ENCODE measurements at regions of chr2 and their contacts with region 1.

Region 1: GRCh38 chr2:119678998-119679710 is at the start of gene TMEM177:
- DNase-seq: peak; percentile 72 to 96 (median 87)
- ATAC-seq: peak; percentile 91
- H3K4me3 ChIP-seq: peak within 1 kb of the TSS; percentile 95
- H3K4me3 Mint-ChIP-seq: peak within 1 kb of the TSS; percentile 87 to 96 (median 90)
- H3K27ac ChIP-seq: peak within 1 kb of the TSS; percentile 88
- H3K27ac Mint-ChIP-seq: peak within 1 kb of the TSS; percentile 58 to 99 (median 97)
- H3K4me1 ChIP-seq: peaks cover 0 to 15% of the 10 kb centered on the region in 2 donors
- H3K4me1 Mint-ChIP-seq: peaks cover 25 to 48% (median 38%) of the 10 kb centered on the region in 7 donors
- H3K27me3 ChIP-seq: no peaks in the 10 kb centered on the region
- H3K27me3 Mint-ChIP-seq: peaks cover 0 to 21% (median 0%) of the 10 kb centered on the region in 5 donors
- total RNA-seq, gene TMEM177: 5.5 to 38.1 (median 11.6) TPM

Region 2: GRCh38 chr2:118088051-118089024 is 1590.8 kb before region 1 on chr2 and contains the start of gene INSIG2:
- CTCF ChIA-PET with region 1: no interaction called
- POLR2A ChIA-PET with region 1: no interaction called
- intact Hi-C with region 1: loop called in 1 of 2 experiments (anchors 5 kb)
- DNase-seq: peak; percentile 77 to 92 (median 81)
- ATAC-seq: peak; percentile 93
- H3K4me3 ChIP-seq: peak within 1 kb of the TSS; percentile 92
- H3K4me3 Mint-ChIP-seq: peak within 1 kb of the TSS; percentile 63 to 96 (median 92)
- H3K27ac ChIP-seq: peak within 1 kb of the TSS; percentile 87
- H3K27ac Mint-ChIP-seq: peak within 1 kb of the TSS; percentile 70 to 97 (median 91)
- H3K4me1 ChIP-seq: peaks cover 0 to 7% of the 10 kb centered on the region in 2 donors
- H3K4me1 Mint-ChIP-seq: peaks cover 6 to 37% (median 24%) of the 10 kb centered on the region in 7 donors
- H3K27me3 ChIP-seq: no peaks in the 10 kb centered on the region
- H3K27me3 Mint-ChIP-seq: peaks cover 0 to 12% (median 0%) of the 10 kb centered on the region in 5 donors
- total RNA-seq, gene INSIG2: 8.5 to 31.5 (median 20.3) TPM

Region 3: DNA sequence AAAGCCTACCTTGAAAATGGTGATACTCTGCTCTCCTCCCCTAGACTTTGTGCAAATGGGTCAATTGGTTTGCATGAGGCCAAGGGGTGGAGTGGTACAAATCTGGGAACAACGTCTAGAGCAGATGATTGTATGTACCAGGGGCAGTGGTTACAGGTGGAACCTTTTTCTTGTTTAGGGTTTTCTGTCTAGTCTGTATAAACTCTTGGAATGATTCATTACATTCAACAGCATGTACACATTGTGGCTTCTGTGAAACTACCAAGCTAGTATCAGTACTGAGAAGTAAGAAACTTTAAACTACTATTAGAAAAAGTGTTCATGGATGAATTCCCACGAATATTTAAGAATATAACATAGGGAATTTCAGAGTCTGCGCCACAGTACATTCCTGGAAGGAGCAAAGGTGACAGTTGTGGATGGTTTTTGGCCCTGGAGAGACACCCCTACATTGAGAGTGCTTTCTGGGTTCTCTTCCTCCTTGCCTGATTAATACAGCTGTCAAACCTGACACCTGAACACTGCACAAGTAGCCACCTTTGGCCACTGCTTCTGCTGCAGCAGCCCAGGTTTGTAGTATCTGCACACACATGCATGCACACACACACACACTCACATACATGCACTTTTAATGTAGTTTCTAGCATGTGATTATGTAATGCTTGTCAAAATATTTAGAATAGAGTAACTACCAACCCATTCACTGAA is 104.9 kb before region 1 on chr2:
- CTCF ChIA-PET with region 1: no interaction called
- POLR2A ChIA-PET with region 1: no interaction called
- intact Hi-C with region 1: no loop called
- DNase-seq: no peak
- ATAC-seq: no peak
- H3K4me3 ChIP-seq: no peak overlapping the region
- H3K4me3 Mint-ChIP-seq: no peak overlapping the region
- H3K27ac ChIP-seq: no peak overlapping the region
- H3K27ac Mint-ChIP-seq: no peak overlapping the region
- H3K4me1 ChIP-seq: no peaks in the 10 kb centered on the region
- H3K4me1 Mint-ChIP-seq: no peaks in the 10 kb centered on the region
- H3K27me3 ChIP-seq: no peaks in the 10 kb centered on the region
- H3K27me3 Mint-ChIP-seq: peaks cover 7 to 39% (median 20%) of the 10 kb centered on the region in 5 donors

Region 4: GRCh38 chr2:119641562-119642258 is 37.4 kb before region 1 on chr2:
- CTCF ChIA-PET with region 1: interaction called, 4 read pairs
- POLR2A ChIA-PET with region 1: interaction called, 3 read pairs
- intact Hi-C with region 1: loop called in 1 of 2 experiments (anchors 1 kb)
- DNase-seq: peak; percentile 42 to 77 (median 64)
- ATAC-seq: peak; percentile 95
- H3K4me3 ChIP-seq: no peak overlapping the region
- H3K4me3 Mint-ChIP-seq: no peak overlapping the region
- H3K27ac ChIP-seq: no peak overlapping the region
- H3K27ac Mint-ChIP-seq: no peak overlapping the region
- H3K4me1 ChIP-seq: peaks cover 0 to 4% of the 10 kb centered on the region in 2 donors
- H3K4me1 Mint-ChIP-seq: peaks cover 0 to 13% (median 5%) of the 10 kb centered on the region in 7 donors
- H3K27me3 ChIP-seq: no peaks in the 10 kb centered on the region
- H3K27me3 Mint-ChIP-seq: peaks cover 0 to 14% (median 0%) of the 10 kb centered on the region in 5 donors

Region 5: DNA sequence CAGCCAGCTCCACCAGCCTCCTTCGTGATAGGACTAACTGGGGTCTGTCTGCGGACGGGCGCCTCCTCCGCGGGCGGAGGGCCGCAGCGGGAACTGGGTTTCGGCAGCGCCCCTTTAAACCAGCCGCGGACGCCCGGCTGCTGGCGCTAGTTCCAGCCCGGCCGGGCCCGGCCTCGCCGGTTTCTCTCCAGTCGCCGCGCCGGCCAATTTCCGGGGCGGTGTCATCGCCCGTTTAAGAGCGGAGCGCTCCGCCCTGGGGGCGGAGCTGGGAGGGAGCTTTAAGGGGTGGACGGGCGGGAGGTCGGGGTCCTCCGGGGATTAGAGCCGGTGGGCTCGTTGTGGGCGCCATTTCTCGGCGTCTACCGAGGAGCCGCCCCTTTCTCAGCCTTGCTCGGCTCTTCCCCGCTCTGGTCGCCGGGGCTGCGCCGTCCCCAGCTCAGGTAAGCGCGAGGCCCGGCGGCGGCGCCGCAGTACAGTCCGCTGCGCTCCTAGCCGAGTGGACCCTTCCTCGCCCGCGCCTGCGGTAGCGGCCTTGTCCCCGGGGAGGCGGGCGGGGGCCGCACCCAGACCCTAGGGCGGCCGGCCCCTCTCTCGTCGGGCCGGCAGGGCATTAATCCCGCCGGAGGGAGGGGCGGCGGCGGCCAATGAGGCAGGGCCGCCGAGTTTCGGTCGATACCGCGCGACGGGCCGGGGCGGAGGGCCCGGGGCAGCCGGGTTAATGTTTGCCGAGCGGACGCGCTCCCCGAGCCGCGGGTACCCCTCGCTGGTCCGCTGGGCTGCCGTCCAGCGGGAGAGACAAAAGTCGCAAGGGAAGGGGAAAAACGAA is 333.8 kb after region 1 on chr2 and contains the start of gene EPB41L5:
- CTCF ChIA-PET with region 1: no interaction called
- POLR2A ChIA-PET with region 1: interaction called, 3 read pairs
- intact Hi-C with region 1: loop called (anchors 1 to 2 kb)
- DNase-seq: peak; percentile 56 to 81 (median 67)
- ATAC-seq: peak; percentile 93
- H3K4me3 ChIP-seq: peak within 1 kb of the TSS; percentile 69
- H3K4me3 Mint-ChIP-seq: peak within 1 kb of the TSS; percentile 73 to 89 (median 86)
- H3K27ac ChIP-seq: peak within 1 kb of the TSS; percentile 70
- H3K27ac Mint-ChIP-seq: peak within 1 kb of the TSS in 8 of 9 donors; percentile 36 to 75 (median 70)
- H3K4me1 ChIP-seq: peaks cover 6% of the 10 kb centered on the region in 2 donors
- H3K4me1 Mint-ChIP-seq: peaks cover 8 to 37% (median 24%) of the 10 kb centered on the region in 7 donors
- H3K27me3 ChIP-seq: no peaks in the 10 kb centered on the region
- H3K27me3 Mint-ChIP-seq: peaks cover 0 to 20% (median 0%) of the 10 kb centered on the region in 5 donors
- total RNA-seq, gene EPB41L5: 2.2 to 9.3 (median 6.8) TPM

Region 6: DNA sequence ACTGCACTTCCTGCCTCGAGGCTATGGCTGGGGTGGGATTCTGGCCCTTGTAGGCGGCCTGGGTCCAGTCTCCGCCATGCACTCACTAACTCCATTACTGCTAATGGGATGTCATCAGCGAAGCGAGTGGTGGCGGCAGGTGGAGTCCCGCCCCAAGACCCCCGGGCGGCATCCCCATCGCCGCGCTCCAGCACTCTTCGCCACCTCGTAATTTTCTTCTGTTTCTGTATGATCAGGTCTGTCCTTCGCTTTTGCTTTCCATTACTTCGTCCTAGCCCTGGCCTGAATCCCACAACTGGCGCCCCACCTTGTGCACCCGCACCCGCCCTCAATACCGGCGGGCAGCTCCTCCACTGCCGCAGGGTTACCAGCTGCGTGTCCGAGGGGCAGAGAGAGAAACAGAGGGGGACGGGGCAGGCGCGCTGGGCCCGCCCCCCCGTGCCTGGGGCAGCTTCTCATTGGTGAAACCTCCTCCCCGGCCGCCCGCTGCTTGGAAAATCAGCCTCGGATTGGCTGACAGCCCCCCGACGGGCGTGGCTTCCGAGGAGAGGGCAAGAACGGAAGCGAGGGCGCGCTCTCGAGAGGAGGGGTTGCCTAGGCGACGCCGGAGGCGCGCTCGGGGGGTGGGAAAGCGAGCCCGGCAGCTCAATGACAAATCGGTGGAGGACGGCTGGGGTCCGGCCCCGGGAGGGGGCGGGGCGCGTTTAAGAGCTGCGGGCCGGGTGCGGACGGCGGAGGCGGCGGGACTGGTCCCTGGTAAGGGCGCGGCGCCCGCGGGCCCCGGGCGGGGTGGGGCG is 573.3 kb after region 1 on chr2 and contains the start of gene RALB:
- CTCF ChIA-PET with region 1: no interaction called
- POLR2A ChIA-PET with region 1: interaction called, 6 read pairs
- intact Hi-C with region 1: loop called in 1 of 2 experiments (anchors 1 kb)
- DNase-seq: peak; percentile 95 to 99 (median 97)
- ATAC-seq: peak; percentile 95
- H3K4me3 ChIP-seq: peak within 1 kb of the TSS; percentile 81
- H3K4me3 Mint-ChIP-seq: peak within 1 kb of the TSS; percentile 94 to 100 (median 98)
- H3K27ac ChIP-seq: peak within 1 kb of the TSS; percentile 76
- H3K27ac Mint-ChIP-seq: peak within 1 kb of the TSS; percentile 87 to 98 (median 95)
- H3K4me1 ChIP-seq: peaks cover 16% of the 10 kb centered on the region in 2 donors
- H3K4me1 Mint-ChIP-seq: peaks cover 29 to 72% (median 51%) of the 10 kb centered on the region in 7 donors
- H3K27me3 ChIP-seq: no peaks in the 10 kb centered on the region
- H3K27me3 Mint-ChIP-seq: peaks cover 0 to 9% (median 4%) of the 10 kb centered on the region in 5 donors
- total RNA-seq, gene RALB: 8.7 to 119 (median 11.6) TPM

Measured in naive thymus-derived CD4-positive, alpha-beta T cell (primary cell).